Heart left ventricle (tissue), 16 donors: ENCODE measurements at regions of chr2 and their contacts with region 1.

Region 1: GRCh38 chr2:151688719-151689118 is 45.6 kb downstream of the NEB start:
- DNase-seq: no peak
- ATAC-seq: no peak
- H3K4me3 ChIP-seq: no peak overlapping the region
- H3K27ac ChIP-seq: no peak overlapping the region
- H3K4me1 ChIP-seq: no peaks in the 10 kb centered on the region
- H3K27me3 ChIP-seq: no peaks in the 10 kb centered on the region
- CTCF ChIP-seq: no peak
- POLR2A ChIP-seq: no peak

Region 2: DNA sequence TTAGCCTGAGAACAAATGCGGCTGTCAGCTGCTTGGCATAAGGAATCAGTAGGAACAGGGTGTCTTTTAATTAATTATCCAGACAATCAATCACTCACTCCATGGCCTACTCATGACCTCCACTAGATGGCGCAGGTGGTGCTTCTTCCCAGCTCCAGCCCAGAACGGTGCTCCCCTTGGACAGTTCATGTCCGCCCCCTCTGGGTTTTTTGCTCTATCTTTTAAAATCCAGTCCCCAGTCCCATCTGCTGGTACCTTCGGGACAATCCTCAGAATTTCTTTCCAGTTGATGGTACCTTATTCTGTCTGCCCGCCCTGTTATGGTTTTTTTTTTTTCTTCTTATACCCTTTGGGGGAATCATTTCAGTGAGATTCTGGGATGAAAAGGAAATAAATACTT is 310.3 kb after region 1 on chr2:
- intact Hi-C with region 1: loop called in 2 of 10 experiments (anchors 5 to 10 kb)
- DNase-seq: peak in 4 of 5 donors; percentile 29 to 56 (median 42)
- ATAC-seq: peak in 3 of 4 donors; percentile 59 to 73 (median 70)
- H3K4me3 ChIP-seq: no peak overlapping the region
- H3K27ac ChIP-seq: no peak overlapping the region
- H3K4me1 ChIP-seq: no peaks in the 10 kb centered on the region
- H3K27me3 ChIP-seq: no peaks in the 10 kb centered on the region
- CTCF ChIP-seq: peak; percentile 60 to 79 (median 72)
- POLR2A ChIP-seq: no peak